Stomach (tissue), 19 donors: ENCODE measurements at regions of chr9 and their contacts with region 1.

Region 1: DNA sequence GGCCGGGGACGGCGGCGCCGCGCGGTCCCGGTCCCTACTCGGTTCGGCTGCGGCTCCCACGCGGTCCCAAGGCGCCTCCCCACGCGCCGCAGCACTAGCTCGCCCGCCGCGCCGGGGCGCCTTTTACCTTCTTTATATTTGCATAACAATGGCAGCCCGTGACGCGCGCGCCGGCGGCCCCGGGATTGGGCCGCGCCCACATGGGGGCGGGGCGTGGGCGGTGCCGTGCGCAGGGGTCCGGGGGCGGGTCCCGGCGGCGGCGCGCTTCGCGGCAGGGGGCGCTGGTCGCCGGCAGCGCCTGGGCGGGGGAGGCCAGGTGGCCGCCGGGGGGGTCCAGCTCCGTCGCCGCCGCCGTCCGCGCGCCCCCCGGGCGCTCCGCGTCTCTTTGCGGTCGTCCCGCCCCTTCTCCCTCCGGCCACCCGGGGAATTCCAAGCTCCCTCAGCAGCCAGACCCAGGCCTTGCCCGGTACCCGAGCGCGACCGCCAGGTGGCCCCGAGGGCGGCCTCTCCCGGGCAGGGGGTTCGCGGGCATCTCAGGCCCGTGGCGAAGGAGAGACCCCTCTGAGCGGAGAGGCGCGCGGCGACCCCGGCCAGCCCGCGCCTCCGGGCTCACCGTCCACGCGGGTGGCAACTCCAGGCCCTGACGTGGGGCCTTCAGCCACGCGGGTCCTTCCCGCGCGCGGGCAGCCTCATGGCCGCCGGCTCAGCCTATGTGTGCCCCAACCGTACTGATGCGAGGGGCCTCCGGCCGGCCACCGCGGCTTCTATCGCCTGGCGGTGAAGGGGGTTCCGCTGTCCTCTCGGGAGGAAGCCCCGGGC is at the start of gene NRARP:
- DNase-seq: peak; percentile 96
- H3K4me3 ChIP-seq: peak within 1 kb of the TSS; percentile 43 to 62 (median 54)
- H3K27ac ChIP-seq: peak within 1 kb of the TSS; percentile 85 to 90 (median 90)
- H3K4me1 ChIP-seq: peaks cover 66 to 93% (median 86%) of the 10 kb centered on the region in 4 donors
- H3K27me3 ChIP-seq: peaks cover 7 to 94% (median 43%) of the 10 kb centered on the region in 3 donors
- CTCF ChIP-seq: peak in 4 of 7 experiments; percentile 9 to 71 (median 52)
- EP300 ChIP-seq: no peak
- POLR2A ChIP-seq: peak in 1 of 4 donors; percentile 17
- total RNA-seq, gene NRARP: 1.2 to 323 (median 14.6) TPM

Region 2: DNA sequence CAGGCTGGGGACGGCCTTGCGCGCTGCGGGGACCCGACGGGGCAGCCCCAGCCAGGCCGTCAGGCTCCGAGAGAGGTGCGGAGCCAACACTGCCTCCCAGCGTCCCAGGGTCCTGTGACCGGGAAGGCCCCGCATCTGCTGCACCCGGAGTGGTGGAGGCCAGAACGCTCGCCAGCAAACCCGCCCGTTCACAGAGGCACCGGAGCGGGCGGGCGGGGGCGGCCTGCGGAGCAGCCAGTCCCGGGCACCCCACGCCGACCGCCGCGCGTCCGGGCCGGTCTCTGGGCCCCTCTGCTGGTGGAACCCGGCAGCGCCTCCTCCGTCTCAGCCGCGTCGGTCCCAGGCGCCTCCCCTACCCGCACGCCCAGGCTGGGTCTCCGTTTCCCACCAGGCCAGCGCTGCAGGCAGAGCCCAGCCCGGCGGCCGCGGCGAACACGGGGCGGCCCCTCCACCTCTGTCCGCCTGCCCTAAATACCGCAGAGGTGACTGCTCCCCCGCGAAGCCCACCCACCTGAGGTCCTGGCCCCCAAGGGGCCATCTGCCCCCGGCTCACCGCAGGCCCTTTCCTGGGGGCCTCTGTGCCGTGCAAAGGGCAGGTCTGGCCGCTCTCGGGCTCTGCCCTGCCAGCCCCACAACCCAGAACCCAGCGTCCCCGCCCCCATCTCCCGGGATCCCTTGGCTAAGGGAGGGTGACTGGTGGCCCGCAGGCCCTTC is 104.6 kb after region 1 on chr9:
- intact Hi-C with region 1: loop called (anchors 10 kb)
- DNase-seq: peak; percentile 79 to 94
- H3K4me3 ChIP-seq: peak overlapping the region; percentile 39 to 47 (median 40)
- H3K27ac ChIP-seq: peak overlapping the region in 4 of 5 donors; percentile 9 to 67 (median 37)
- H3K4me1 ChIP-seq: peaks cover 28 to 40% (median 37%) of the 10 kb centered on the region in 4 donors
- H3K27me3 ChIP-seq: peaks cover 0 to 19% (median 5%) of the 10 kb centered on the region in 3 donors
- CTCF ChIP-seq: peak in 5 of 7 experiments; percentile 29 to 80 (median 72)
- EP300 ChIP-seq: no peak
- POLR2A ChIP-seq: no peak